ENCODE measurements at regions of chr14 and their contacts with region 1.

Region 1: GRCh38 chr14:91866061-91866460 is 1.3 kb downstream of the TC2N start:
- DNase-seq: peak in 7 of 14 experiments; percentile 12 to 37 (median 25)
- ATAC-seq: peak; percentile 5
- H3K4me3 ChIP-seq: peak overlapping the region; percentile 85
- H3K4me3 Mint-ChIP-seq: peak overlapping the region; percentile 96
- H3K27ac ChIP-seq: peak overlapping the region; percentile 86 to 97
- H3K27ac Mint-ChIP-seq: peak overlapping the region; percentile 95
- H3K4me1 ChIP-seq: peaks cover 76% of the 10 kb centered on the region
- H3K4me1 Mint-ChIP-seq: peaks cover 86% of the 10 kb centered on the region
- H3K27me3 ChIP-seq: no peaks in the 10 kb centered on the region
- H3K27me3 Mint-ChIP-seq: no peaks in the 10 kb centered on the region
- CTCF ChIP-seq: no peak

Region 2: GRCh38 chr14:90399541-90400444 is 1466.3 kb before region 1 on chr14:
- CTCF ChIA-PET with region 1: no interaction called
- POLR2A ChIA-PET with region 1: no interaction called
- intact Hi-C with region 1: loop called in 1 of 2 experiments (anchors 10 kb)
- DNase-seq: peak; percentile 72 to 94 (median 80)
- ATAC-seq: peak; percentile 48
- H3K4me3 ChIP-seq: peak overlapping the region; percentile 62
- H3K4me3 Mint-ChIP-seq: peak overlapping the region; percentile 100
- H3K27ac ChIP-seq: peak overlapping the region; percentile 86 to 88
- H3K27ac Mint-ChIP-seq: peak overlapping the region; percentile 100
- H3K4me1 ChIP-seq: peaks cover 52% of the 10 kb centered on the region
- H3K4me1 Mint-ChIP-seq: peaks cover 73% of the 10 kb centered on the region
- H3K27me3 ChIP-seq: no peaks in the 10 kb centered on the region
- H3K27me3 Mint-ChIP-seq: peaks cover 9% of the 10 kb centered on the region
- CTCF ChIP-seq: peak; percentile 100

Region 3: DNA sequence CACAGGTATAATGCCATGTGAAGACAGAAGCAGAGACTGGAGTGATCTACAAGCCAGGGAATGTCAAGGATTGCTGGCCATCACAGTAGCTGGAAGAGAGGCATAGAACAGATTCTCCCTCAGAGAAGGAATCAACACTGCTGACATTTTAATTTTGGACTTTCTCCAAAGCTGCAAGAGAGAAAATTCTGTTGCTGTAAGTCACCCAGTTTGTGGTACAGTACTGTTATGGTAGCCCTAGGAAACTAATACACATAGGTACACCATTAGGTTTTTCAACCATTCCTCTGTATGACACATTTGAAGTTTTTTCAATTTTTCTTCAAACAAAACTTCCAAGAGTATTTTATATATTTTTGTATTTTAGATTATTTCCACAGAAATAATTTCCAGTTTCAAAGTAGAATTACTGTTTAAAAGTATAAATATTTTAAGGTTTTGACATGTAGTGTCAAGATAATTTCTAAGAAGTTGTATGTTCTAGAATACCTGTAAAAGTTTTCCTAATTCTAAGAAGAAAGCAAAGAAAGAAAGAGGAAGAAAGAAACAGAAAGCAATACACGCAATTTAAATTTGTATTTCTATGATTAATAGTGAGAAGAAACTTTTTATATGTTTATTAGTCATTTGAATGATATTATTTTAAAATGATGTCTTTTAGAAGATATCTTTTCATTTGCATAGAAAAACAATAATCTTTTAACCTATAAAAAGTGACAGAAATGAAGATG is 69.3 kb before region 1 on chr14:
- CTCF ChIA-PET with region 1: interaction called, 4 read pairs
- POLR2A ChIA-PET with region 1: interaction called, 5 read pairs
- intact Hi-C with region 1: loop called in 1 of 2 experiments (anchors 5 kb)
- DNase-seq: no peak
- ATAC-seq: no peak
- H3K4me3 ChIP-seq: no peak overlapping the region
- H3K4me3 Mint-ChIP-seq: no peak overlapping the region
- H3K27ac ChIP-seq: no peak overlapping the region
- H3K27ac Mint-ChIP-seq: peak overlapping the region; percentile 52
- H3K4me1 ChIP-seq: no peaks in the 10 kb centered on the region
- H3K4me1 Mint-ChIP-seq: peaks cover 28% of the 10 kb centered on the region
- H3K27me3 ChIP-seq: no peaks in the 10 kb centered on the region
- H3K27me3 Mint-ChIP-seq: no peaks in the 10 kb centered on the region
- CTCF ChIP-seq: no peak

Region 4: GRCh38 chr14:91836119-91836881 is 29.8 kb before region 1 on chr14:
- CTCF ChIA-PET with region 1: interaction called, 5 read pairs
- POLR2A ChIA-PET with region 1: interaction called, 21 read pairs
- intact Hi-C with region 1: loop called in 1 of 2 experiments (anchors 2 kb)
- DNase-seq: peak; percentile 78 to 97 (median 90)
- ATAC-seq: peak; percentile 95
- H3K4me3 ChIP-seq: peak overlapping the region; percentile 63
- H3K4me3 Mint-ChIP-seq: peak overlapping the region; percentile 93
- H3K27ac ChIP-seq: peak overlapping the region; percentile 43 to 59
- H3K27ac Mint-ChIP-seq: peak overlapping the region; percentile 90
- H3K4me1 ChIP-seq: peaks cover 33% of the 10 kb centered on the region
- H3K4me1 Mint-ChIP-seq: peaks cover 83% of the 10 kb centered on the region
- H3K27me3 ChIP-seq: no peaks in the 10 kb centered on the region
- H3K27me3 Mint-ChIP-seq: no peaks in the 10 kb centered on the region
- CTCF ChIP-seq: no peak

Region 5: GRCh38 chr14:91901449-91902226 is 35.6 kb after region 1 on chr14:
- CTCF ChIA-PET with region 1: no interaction called
- POLR2A ChIA-PET with region 1: interaction called, 5 read pairs
- intact Hi-C with region 1: loop called in 1 of 2 experiments (anchors 2 kb)
- DNase-seq: no peak
- ATAC-seq: no peak
- H3K4me3 ChIP-seq: no peak overlapping the region
- H3K4me3 Mint-ChIP-seq: no peak overlapping the region
- H3K27ac ChIP-seq: no peak overlapping the region
- H3K27ac Mint-ChIP-seq: no peak overlapping the region
- H3K4me1 ChIP-seq: peaks cover 5% of the 10 kb centered on the region
- H3K4me1 Mint-ChIP-seq: no peaks in the 10 kb centered on the region
- H3K27me3 ChIP-seq: no peaks in the 10 kb centered on the region
- H3K27me3 Mint-ChIP-seq: no peaks in the 10 kb centered on the region
- CTCF ChIP-seq: no peak